ENCODE measurements at regions of chr5 and their contacts with region 1.

Region 1: DNA sequence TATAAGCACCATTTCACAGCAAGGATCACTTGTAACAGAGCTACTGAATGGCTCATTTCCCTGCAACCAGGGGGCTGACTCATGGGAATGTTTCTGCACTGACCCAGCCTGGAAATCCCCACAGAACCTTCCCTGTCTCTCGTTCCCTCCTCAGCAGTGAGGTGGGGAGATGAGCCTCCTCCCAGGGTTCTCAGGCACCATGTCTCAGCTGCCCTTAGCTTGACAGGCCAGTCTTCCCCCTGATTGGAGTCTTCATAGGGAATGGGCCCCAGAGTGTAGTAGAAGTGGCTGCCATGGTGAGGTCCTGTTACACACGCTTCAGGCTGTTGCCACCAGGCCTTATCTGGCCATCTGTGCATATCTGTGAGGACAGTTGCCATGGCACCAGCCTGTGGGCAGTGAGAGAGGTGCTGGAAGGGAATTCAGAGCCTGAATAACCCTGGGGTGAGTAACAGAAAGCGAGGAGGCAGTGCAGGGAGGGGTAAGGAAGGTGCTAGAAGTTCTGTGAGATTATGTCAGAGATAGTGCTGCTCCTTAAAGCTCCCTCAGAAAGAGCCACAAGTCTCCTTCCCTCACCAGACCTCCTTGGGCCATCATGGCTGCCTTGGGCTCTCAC is 324.4 kb downstream of the ENC1 start:
- DNase-seq: peak; percentile 99
- H3K4me3 ChIP-seq: no peak overlapping the region
- H3K27ac ChIP-seq: peak overlapping the region; percentile 98
- H3K4me1 ChIP-seq: peaks cover 52% of the 10 kb centered on the region
- H3K27me3 ChIP-seq: no peaks in the 10 kb centered on the region
- CTCF ChIP-seq: no peak

Region 2: DNA sequence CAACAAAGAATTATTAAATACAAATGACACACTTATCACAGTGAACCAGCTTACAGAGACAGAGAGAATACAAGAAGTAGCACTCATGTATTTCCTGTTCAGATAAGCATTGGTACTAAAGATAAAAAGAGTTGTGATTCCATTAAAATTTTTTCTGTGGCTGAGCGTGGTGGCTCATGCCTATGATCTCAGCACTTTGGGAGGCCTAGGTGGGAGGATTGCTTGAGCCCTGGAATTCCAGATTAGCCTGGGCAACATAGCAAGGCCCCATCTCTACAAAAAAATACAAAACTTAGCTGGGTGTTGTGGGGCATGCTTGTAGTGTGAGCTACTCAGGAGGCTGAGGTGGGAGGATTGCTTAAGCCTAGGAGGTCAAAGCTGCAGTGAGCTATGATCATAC is 1327.4 kb before region 1 on chr5:
- CTCF ChIA-PET with region 1: no interaction called
- dilution Hi-C with region 1: no loop called
- in situ Hi-C with region 1: no loop called
- intact Hi-C with region 1: no loop called
- DNase-seq: no peak
- H3K4me3 ChIP-seq: no peak overlapping the region
- H3K27ac ChIP-seq: no peak overlapping the region
- H3K4me1 ChIP-seq: no peaks in the 10 kb centered on the region
- H3K27me3 ChIP-seq: no peaks in the 10 kb centered on the region
- CTCF ChIP-seq: no peak

Region 3: GRCh38 chr5:74035521-74035981 is 280.6 kb before region 1 on chr5:
- CTCF ChIA-PET with region 1: no interaction called
- dilution Hi-C with region 1: no loop called
- in situ Hi-C with region 1: loop called in 1 of 2 experiments (anchors 10 kb)
- intact Hi-C with region 1: loop called (anchors 5 kb)
- DNase-seq: peak; percentile 84
- H3K4me3 ChIP-seq: peak overlapping the region in 1 of 3 experiments; percentile 9
- H3K27ac ChIP-seq: peak overlapping the region; percentile 90
- H3K4me1 ChIP-seq: peaks cover 55% of the 10 kb centered on the region
- H3K27me3 ChIP-seq: no peaks in the 10 kb centered on the region
- CTCF ChIP-seq: peak; percentile 58 to 61

Region 4: DNA sequence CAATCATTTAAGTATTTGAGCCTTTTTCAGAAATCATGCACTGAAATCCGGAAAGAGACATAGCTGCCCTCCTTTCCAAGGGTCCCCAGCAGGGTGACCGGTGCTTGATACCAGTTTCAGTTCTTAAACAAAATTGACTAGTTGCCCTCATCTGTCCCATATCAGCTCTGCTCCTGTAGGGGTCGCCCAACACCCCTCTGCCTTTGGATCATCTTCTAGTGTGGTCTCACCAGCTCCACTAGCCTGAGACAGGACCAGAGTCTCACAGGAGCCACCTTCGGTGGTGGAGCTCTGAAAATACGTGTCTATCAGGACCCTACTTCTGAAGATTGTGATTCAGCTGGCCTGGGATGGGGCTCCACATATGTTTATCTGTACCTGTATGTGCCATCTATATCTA is 103.8 kb before region 1 on chr5:
- CTCF ChIA-PET with region 1: no interaction called
- dilution Hi-C with region 1: no loop called
- in situ Hi-C with region 1: no loop called
- intact Hi-C with region 1: loop called (anchors 1 kb)
- DNase-seq: no peak
- H3K4me3 ChIP-seq: no peak overlapping the region
- H3K27ac ChIP-seq: no peak overlapping the region
- H3K4me1 ChIP-seq: no peaks in the 10 kb centered on the region
- H3K27me3 ChIP-seq: no peaks in the 10 kb centered on the region
- CTCF ChIP-seq: peak; percentile 38 to 52

Region 5: DNA sequence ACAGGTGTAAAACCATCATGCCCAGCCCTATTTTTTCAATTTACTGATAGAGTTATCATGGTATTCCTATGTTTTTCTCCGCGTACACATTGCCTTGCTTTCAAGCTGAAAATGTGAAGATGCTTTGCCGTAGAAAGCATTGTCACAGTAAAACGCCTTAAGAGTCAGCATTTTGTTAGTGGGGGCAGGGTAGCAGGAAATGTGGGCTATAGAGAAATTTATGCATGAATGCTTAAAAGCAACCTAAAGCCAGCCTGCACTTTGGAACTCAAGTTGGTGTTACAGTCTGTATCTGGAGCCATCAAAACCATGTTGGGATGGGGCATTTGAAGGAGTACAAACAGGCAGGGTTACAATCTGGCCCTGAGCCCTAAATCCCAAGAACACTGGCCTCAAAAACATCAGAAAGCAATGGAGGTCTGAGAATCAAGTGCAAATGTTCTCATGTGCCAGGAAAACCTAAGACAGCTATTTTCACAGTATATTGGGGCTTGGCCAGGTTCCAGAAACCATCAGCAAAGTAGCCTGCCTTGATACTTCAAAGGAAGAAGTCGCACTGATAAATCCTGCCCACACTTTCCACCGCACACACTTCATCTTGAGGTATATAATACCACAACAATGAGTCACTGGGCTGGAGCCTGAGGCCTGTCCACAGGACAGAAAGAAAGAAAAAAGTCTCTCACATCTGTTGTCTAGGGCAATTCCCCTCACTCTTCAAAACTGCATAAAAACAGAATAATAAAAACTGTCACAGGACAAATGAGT is 10.6 kb after region 1 on chr5:
- CTCF ChIA-PET with region 1: no interaction called
- dilution Hi-C with region 1: no loop called
- in situ Hi-C with region 1: no loop called
- intact Hi-C with region 1: loop called (anchors 1 kb)
- DNase-seq: peak; percentile 97
- H3K4me3 ChIP-seq: no peak overlapping the region
- H3K27ac ChIP-seq: peak overlapping the region; percentile 38
- H3K4me1 ChIP-seq: peaks cover 25% of the 10 kb centered on the region
- H3K27me3 ChIP-seq: no peaks in the 10 kb centered on the region
- CTCF ChIP-seq: no peak

Region 6: GRCh38 chr5:74394916-74395781 is 79.0 kb after region 1 on chr5:
- CTCF ChIA-PET with region 1: interaction called, 3 read pairs
- dilution Hi-C with region 1: no loop called
- in situ Hi-C with region 1: loop called in 1 of 2 experiments (anchors 10 kb)
- intact Hi-C with region 1: loop called (anchors 1 kb)
- DNase-seq: peak; percentile 94
- H3K4me3 ChIP-seq: no peak overlapping the region
- H3K27ac ChIP-seq: peak overlapping the region; percentile 90
- H3K4me1 ChIP-seq: peaks cover 29% of the 10 kb centered on the region
- H3K27me3 ChIP-seq: no peaks in the 10 kb centered on the region
- CTCF ChIP-seq: peak; percentile 9 to 36

Region 7: GRCh38 chr5:74556631-74557595 is 240.7 kb after region 1 on chr5:
- CTCF ChIA-PET with region 1: no interaction called
- dilution Hi-C with region 1: no loop called
- in situ Hi-C with region 1: no loop called
- intact Hi-C with region 1: loop called (anchors 5 kb)
- DNase-seq: peak; percentile 75
- H3K4me3 ChIP-seq: no peak overlapping the region
- H3K27ac ChIP-seq: no peak overlapping the region
- H3K4me1 ChIP-seq: peaks cover 14% of the 10 kb centered on the region
- H3K27me3 ChIP-seq: no peaks in the 10 kb centered on the region
- CTCF ChIP-seq: no peak

Measured in mammary epithelial cell (primary cell).